ENCODE measurements at regions of chr5 and their contacts with region 1.

Region 1: GRCh38 chr5:102536323-102536928 is 37.6 kb upstream of the SLCO6A1 start:
- DNase-seq: no peak
- H3K4me3 Mint-ChIP-seq: no peak overlapping the region
- H3K27ac Mint-ChIP-seq: no peak overlapping the region
- H3K4me1 Mint-ChIP-seq: no peaks in the 10 kb centered on the region
- H3K27me3 Mint-ChIP-seq: no peaks in the 10 kb centered on the region
- CTCF ChIP-seq: peak; percentile 39

Region 2: DNA sequence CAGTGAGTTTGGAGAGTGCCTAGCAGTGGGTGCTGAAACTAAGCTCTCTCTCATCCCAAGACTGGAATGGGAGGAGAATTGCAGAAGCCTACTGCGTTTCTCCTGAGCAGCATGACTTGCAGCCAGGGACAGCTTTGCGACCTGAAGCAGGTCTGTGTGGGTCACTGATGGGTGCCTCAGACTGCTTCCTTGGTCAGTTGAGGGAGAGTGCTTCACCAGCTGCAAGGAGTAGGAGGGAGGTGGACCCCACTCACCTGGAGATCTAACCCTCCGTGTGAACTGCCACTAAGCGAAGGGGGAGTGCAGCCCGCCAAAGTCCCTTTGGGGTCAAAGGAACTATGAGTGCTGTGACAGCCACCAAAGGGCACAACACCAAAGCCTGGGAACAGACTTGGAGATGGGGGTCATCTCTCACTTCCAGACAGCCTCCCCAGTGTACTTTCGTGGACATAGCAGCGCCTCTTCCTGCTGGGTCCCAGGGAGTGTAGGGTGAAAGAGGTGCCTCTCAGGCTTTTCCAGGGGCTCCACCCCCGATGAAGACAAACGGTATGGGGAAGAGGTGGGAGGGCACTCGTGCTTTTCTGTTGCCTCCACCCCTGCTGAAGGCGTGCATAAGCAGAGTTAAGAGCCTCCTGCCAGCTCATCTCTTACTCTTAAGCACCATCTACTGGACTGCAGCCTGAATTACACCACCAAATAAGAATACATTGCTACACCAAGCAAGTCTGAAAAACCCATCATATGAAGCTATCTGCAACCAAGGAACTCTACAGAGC is 687.9 kb after region 1 on chr5:
- CTCF ChIA-PET with region 1: interaction called, 3 read pairs
- intact Hi-C with region 1: loop called (anchors 2 kb)
- DNase-seq: peak; percentile 69
- H3K4me3 Mint-ChIP-seq: peak overlapping the region; percentile 20
- H3K27ac Mint-ChIP-seq: no peak overlapping the region
- H3K4me1 Mint-ChIP-seq: no peaks in the 10 kb centered on the region
- H3K27me3 Mint-ChIP-seq: no peaks in the 10 kb centered on the region
- CTCF ChIP-seq: peak; percentile 47

Measured in Calu3 (cell line).